HEK293T (cell line): ENCODE measurements at regions of chr13 and their contacts with region 1.

Region 1: DNA sequence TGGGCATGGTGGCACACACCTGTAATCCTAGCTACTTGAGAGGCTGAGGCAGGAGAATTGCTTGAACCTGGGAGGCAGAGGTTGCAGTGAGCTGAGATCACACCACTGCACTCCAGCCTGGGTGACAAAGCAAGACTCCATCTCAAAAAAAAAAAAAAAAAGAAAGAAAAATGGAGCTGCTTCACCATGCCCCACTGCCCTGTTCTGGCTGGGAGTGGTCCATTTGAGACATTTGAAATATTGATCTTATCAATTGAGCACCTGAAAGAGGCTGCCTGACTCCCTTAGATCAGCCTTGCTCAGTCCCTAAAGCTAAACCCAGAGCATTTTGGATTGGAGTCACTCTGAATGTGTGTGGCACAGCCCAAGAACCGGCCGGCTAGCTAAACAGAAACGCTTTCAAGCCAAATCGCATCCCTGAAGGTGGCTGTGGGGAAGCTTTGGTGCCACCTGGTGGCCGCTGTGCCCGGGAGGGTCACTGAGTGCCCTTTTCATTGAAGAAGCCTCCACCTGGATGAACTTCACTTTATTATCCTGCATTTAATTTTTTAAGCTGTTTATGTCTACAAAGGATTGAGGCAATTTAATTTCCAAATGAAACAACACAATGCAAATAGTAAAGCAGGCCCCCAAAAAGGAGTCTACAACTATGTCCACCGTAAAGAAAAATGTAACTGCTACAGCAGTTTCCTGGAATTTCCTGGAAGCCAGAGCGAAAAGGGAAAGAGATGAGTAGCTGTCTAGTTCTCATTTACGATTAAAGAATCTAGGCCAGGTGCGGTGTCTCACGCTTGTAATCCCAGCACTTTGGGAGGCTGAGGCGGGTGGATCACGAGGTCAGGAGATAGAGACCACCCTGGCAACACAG is 53.1 kb upstream of the SERPINE3 start:
- DNase-seq: peak; percentile 79

Region 2: DNA sequence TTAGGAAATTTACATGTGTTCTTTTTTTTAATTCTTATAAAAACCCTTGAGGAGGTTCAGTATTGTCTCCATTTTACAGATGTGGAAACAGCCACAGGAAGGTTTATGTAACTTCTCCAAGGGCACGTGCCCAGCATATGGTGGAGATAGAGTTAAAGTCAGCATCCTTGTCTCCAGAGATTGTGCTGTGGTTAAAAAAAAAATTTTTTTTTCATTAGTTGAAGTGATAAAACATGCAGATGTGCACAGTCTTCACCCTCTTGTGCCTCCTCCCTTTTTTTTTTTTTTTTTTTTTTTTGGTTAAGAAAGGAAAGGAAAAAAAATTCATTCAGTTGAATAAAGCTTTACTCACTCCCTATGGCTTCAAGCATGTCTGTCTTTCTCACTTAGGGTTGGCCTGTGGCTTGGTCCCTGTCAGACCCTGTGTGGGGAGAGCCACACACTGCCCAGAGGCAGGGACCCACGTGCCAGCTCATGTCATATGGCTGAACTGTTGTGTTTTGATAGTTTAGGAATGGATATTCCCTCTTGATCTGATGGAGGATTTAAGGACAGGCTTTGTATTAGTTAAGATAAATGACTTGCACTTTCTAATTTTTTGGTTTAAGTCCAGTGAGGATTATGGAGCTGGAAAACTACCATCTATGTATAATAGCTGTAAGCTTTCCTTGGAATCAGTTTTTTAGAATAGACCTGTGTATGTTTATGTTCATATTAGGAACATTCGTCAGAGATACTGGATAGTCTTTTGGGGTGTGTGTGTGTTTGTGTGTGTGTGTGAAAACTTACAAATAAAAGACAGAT is 357.5 kb before region 1 on chr13:
- CTCF ChIA-PET with region 1: no interaction called
- POLR2A ChIA-PET with region 1: no interaction called
- DNase-seq: no peak

Region 3: DNA sequence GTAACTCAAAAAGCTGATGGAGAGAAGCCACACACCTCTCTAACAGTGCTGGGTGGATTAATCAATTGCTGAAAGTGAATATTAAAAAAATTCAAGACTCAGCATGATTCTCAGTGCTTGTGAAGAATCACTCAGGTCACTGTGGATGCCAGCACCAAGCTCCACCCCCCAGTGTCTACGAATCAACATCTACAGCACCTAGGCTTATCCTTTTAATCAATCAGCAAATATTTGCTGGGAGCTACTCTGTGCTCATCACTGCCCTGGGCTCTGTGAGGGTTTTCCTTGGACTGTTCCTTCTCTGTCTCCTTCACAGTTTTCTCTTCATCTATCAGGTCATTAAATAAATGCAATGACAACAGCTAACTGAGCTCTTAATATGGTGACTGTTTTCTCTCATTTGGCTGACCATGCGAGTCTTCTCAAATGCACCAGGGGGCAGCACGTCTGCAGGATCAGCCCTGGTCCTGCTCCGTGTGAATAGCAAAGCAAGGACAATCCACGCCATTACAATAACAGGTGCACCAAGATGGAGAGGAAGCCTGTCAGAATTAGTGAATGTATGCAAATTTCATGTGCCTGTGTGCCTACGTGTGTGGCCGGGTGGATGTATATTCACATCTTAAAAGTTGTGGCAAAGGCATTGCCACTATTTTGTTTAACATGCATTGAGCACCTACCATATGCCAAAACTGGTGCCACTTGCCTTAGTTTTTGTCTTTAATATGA is 160.7 kb before region 1 on chr13:
- CTCF ChIA-PET with region 1: interaction called, 38 read pairs
- POLR2A ChIA-PET with region 1: no interaction called
- DNase-seq: peak; percentile 79

Region 4: GRCh38 chr13:51148952-51149573 is 137.3 kb before region 1 on chr13:
- CTCF ChIA-PET with region 1: interaction called, 15 read pairs
- POLR2A ChIA-PET with region 1: no interaction called
- DNase-seq: peak; percentile 44

Region 5: DNA sequence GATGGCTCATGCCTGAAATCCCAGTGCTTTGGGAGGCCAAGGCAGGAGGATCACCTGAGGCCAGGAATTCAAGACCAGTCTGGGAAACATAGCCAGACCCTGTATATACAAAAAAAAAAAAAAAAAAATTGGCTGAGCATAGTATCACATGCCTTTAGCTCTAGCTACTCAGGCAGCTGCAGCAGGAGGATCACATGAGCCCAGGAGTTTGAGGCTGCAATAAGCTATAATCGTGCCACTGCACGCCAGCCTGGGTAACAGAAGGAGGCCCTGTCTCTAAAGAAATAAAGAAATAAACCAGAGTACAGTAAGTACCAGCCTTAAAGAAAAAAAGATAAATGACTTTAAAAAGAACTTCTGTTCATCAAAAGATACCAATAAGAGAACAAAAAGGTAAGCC is 11.3 kb before region 1 on chr13:
- CTCF ChIA-PET with region 1: interaction called, 10 read pairs
- POLR2A ChIA-PET with region 1: no interaction called
- DNase-seq: no peak

Region 6: GRCh38 chr13:51303063-51303552 is 16.7 kb after region 1 on chr13:
- CTCF ChIA-PET with region 1: no interaction called
- POLR2A ChIA-PET with region 1: no interaction called
- DNase-seq: no peak